Activated T-helper 2 cell treated with anti-CD3 and anti-CD28 coated beads, Interferon-gamma antibody, Interleukin-2, Interleukin-4, amounts not matched to agents 10 μg/mL and 5 μg/mL and 100 μg/mL, durations not matched to agents 14 hours and 24 hours and 36 hours (primary cell): ENCODE measurements at regions of chr2 and their contacts with region 1.

Region 1: DNA sequence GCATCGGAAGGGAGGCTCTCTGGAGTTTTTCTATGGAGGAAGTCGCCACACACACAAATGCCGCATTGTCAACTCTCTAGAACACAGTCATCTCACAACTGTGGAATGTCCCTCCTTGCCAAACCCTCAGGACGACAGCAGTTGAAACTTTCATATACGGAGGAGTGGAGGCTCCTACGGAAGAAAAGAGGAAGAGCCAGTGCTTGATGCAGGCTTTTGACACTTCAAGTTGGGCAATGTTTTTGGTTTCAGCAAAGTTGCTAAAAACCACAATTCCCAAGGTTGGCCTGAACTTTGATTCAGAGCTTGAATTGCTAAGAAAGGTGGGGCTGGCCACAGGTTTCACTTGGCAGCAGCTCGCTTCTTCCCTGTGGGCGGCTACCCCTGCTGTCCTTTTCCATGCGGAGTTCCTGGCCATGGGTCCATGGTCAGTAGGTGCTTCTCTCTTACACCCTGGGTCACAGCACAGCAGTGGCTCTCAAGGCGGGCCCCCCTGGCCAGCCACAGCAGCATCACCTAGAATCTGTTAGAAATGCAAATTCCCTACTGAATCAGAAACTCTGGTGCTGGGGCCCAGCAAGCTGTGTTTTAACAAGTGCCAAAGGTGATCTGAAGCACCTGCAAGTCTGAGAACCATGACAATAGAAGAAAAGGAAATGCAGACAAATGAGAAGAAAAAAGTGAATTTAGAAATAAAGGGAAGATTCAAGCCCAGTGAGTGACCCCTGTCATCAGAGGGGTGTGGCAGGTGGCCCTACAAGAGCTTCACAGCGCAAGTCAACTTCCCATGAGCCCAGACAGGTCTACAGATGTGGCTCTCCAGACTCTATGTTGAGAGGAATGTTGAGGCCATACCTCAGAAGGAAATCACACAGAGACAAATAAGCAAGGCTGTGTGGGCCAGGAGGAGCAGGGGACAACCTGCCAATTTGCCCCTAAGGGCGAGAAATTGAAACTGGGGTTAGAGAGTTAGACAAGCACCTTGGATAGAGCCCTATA is 856.4 kb downstream of the RNF144A start:
- DNase-seq: peak; percentile 26
- H3K4me3 Mint-ChIP-seq: peak overlapping the region; percentile 31
- H3K27ac Mint-ChIP-seq: peak overlapping the region; percentile 91
- H3K4me1 Mint-ChIP-seq: peaks cover 58% of the 10 kb centered on the region
- H3K27me3 Mint-ChIP-seq: no peaks in the 10 kb centered on the region

Region 2: DNA sequence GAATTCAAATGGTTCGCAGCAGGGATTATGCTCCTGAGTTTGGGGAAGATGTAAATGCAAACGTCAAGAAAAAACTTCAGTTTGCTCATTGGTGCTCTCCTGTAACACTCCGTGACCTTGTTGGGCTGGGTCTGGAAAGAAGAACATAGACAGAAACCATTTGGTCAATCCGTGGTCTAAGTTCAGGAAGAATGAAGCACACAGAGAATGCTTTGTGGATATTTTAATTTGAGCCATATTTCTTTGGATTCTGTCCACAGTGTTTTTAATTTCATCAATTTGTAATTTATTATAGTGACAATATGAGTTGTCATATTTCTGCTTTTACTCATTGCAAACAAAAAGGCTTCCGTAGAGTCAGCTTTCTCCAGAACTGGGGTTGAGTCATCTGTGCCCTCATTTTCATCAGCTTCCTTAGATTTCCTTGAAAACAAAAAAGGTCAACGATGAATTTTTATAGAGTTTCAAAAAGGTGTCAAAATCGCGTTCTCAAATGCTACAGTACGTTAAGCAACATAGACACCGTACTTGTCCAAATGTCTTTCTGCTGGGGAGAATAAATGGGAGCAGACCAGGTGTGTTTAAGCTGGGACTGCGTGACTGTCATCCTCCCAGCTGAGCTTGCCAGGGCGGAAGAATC is 250.1 kb before region 1 on chr2:
- intact Hi-C with region 1: loop called (anchors 5 kb)
- DNase-seq: no peak
- H3K4me3 Mint-ChIP-seq: peak overlapping the region; percentile 46
- H3K27ac Mint-ChIP-seq: peak overlapping the region; percentile 88
- H3K4me1 Mint-ChIP-seq: peaks cover 69% of the 10 kb centered on the region
- H3K27me3 Mint-ChIP-seq: no peaks in the 10 kb centered on the region

Region 3: GRCh38 chr2:7685342-7686015 is 88.2 kb before region 1 on chr2:
- intact Hi-C with region 1: no loop called
- DNase-seq: no peak
- H3K4me3 Mint-ChIP-seq: no peak overlapping the region
- H3K27ac Mint-ChIP-seq: no peak overlapping the region
- H3K4me1 Mint-ChIP-seq: peaks cover 13% of the 10 kb centered on the region
- H3K27me3 Mint-ChIP-seq: no peaks in the 10 kb centered on the region

Region 4: GRCh38 chr2:7725171-7725849 is 48.4 kb before region 1 on chr2:
- intact Hi-C with region 1: loop called (anchors 1 kb)
- DNase-seq: peak; percentile 51
- H3K4me3 Mint-ChIP-seq: peak overlapping the region; percentile 89
- H3K27ac Mint-ChIP-seq: peak overlapping the region; percentile 90
- H3K4me1 Mint-ChIP-seq: peaks cover 58% of the 10 kb centered on the region
- H3K27me3 Mint-ChIP-seq: no peaks in the 10 kb centered on the region

Region 5: DNA sequence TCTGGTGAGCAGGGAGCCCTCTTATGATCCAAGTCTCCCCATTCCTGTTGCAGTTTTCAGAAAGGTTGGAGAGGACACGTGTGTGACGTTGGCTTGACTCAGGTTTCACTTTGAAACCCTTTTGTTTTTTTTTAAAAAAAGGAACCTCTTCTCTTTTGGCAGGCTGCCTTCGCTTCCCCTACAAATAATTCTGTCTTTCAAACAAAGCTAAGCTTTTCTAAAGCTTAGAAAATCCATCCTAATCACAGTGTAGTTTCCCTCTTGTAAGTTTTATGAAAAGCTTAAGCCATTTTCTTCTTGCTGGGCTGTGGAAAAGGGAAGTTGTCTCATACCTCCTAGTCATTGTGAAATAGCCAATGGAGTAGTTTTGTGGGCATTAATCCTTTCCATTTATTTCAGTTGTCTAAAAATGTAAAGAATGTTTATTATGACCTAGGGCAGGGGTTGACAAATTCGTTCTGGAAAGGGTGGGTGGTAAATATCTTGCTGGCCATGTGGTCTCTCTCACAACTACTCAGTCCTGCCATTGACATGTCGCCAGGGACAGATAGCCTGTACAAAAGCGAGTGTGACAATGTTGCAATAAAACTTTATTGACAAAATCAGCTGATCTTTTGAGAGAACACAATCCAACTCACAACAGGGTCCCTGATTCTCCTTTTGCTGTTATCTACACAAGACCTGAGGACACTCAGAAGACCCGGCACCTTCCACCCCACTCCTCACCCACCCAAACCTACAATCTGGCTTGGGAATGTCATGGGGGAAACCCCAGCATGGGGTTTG is 22.3 kb after region 1 on chr2:
- intact Hi-C with region 1: no loop called
- DNase-seq: no peak
- H3K4me3 Mint-ChIP-seq: no peak overlapping the region
- H3K27ac Mint-ChIP-seq: peak overlapping the region; percentile 79
- H3K4me1 Mint-ChIP-seq: peaks cover 7% of the 10 kb centered on the region
- H3K27me3 Mint-ChIP-seq: no peaks in the 10 kb centered on the region

Region 6: GRCh38 chr2:7835693-7836680 is 62.3 kb after region 1 on chr2:
- intact Hi-C with region 1: no loop called
- DNase-seq: no peak
- H3K4me3 Mint-ChIP-seq: no peak overlapping the region
- H3K27ac Mint-ChIP-seq: no peak overlapping the region
- H3K4me1 Mint-ChIP-seq: peaks cover 9% of the 10 kb centered on the region
- H3K27me3 Mint-ChIP-seq: no peaks in the 10 kb centered on the region

Region 7: GRCh38 chr2:7930800-7931635 is 157.4 kb after region 1 on chr2:
- intact Hi-C with region 1: loop called (anchors 1 kb)
- DNase-seq: no peak
- H3K4me3 Mint-ChIP-seq: peak overlapping the region; percentile 17
- H3K27ac Mint-ChIP-seq: peak overlapping the region; percentile 85
- H3K4me1 Mint-ChIP-seq: peaks cover 36% of the 10 kb centered on the region
- H3K27me3 Mint-ChIP-seq: no peaks in the 10 kb centered on the region

Region 8: GRCh38 chr2:8234757-8235374 is 461.2 kb after region 1 on chr2:
- intact Hi-C with region 1: loop called (anchors 1 kb)
- DNase-seq: no peak
- H3K4me3 Mint-ChIP-seq: no peak overlapping the region
- H3K27ac Mint-ChIP-seq: no peak overlapping the region
- H3K4me1 Mint-ChIP-seq: peaks cover 34% of the 10 kb centered on the region
- H3K27me3 Mint-ChIP-seq: peaks cover 4% of the 10 kb centered on the region

Region 9: DNA sequence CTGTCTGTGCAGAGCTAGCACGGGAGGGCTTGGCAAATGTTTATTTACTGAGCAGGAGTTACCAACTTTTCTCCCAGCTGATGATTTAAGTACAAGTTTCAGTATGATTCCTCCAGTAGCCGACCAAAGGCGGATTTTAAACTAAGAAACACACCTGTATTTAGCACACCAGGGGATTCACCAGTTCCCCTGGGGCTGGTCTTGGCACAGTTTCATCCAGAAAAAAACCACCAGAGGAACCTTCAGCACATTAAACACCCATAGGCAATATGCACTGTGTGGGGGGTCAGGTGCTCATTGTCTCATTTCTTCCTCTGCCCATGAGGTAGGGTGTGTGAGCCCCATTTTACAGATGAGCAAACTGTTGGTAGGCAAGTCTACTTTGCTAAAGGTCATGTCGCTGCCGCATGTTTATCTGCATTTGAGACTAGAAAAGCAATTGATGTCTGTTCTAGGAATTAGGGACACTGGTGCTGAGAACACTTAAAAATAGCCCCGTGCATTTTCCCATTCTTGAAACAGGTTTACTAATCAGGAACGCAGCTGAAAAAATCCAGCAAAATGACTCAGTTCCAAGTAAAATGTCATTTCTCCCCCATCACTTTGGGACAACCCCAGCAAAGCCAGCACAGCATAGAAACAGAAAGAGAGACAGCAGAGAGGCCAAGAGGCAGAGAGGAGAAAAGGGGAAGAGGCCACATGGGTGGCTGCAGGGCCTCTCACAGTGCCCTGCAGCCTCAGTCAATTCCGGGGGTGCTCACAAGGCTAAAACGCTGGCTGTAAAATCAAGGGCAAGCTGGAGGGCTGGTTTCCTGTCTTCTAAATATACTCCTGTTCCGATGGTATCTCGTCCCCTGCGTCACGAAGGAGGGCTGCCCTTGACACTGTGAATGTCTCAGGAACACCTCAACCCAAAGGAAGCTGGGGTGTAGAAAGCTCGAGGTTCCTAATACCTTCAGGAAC is 741.4 kb after region 1 on chr2:
- intact Hi-C with region 1: loop called (anchors 1 kb)
- DNase-seq: peak; percentile 58
- H3K4me3 Mint-ChIP-seq: peak overlapping the region; percentile 45
- H3K27ac Mint-ChIP-seq: peak overlapping the region; percentile 97
- H3K4me1 Mint-ChIP-seq: peaks cover 60% of the 10 kb centered on the region
- H3K27me3 Mint-ChIP-seq: no peaks in the 10 kb centered on the region